ENCODE measurements at regions of chr2 and their contacts with region 1.

Region 1: GRCh38 chr2:231642631-231643494 is 50.2 kb downstream of the TEX44 start:
- DNase-seq: peak; percentile 94 to 97
- ATAC-seq: peak; percentile 82 to 84
- H3K4me3 ChIP-seq: peak overlapping the region; percentile 9 to 43 (median 28)
- H3K27ac ChIP-seq: peak overlapping the region; percentile 93 to 99 (median 96)
- H3K4me1 ChIP-seq: peaks cover 51 to 52% of the 10 kb centered on the region in 2 donors
- H3K27me3 ChIP-seq: no peaks in the 10 kb centered on the region
- CTCF ChIP-seq: no peak
- POLR2A ChIP-seq: peak; percentile 89 to 93

Region 2: GRCh38 chr2:231557571-231558237 is 85.2 kb before region 1 on chr2:
- in situ Hi-C with region 1: no loop called
- intact Hi-C with region 1: no loop called
- DNase-seq: peak; percentile 61 to 76
- ATAC-seq: peak; percentile 99
- H3K4me3 ChIP-seq: no peak overlapping the region
- H3K27ac ChIP-seq: peak overlapping the region in 2 of 4 donors; percentile 46 to 62
- H3K4me1 ChIP-seq: peaks cover 0 to 7% of the 10 kb centered on the region in 2 donors
- H3K27me3 ChIP-seq: no peaks in the 10 kb centered on the region
- CTCF ChIP-seq: peak; percentile 37 to 77 (median 65)
- POLR2A ChIP-seq: no peak

Region 3: DNA sequence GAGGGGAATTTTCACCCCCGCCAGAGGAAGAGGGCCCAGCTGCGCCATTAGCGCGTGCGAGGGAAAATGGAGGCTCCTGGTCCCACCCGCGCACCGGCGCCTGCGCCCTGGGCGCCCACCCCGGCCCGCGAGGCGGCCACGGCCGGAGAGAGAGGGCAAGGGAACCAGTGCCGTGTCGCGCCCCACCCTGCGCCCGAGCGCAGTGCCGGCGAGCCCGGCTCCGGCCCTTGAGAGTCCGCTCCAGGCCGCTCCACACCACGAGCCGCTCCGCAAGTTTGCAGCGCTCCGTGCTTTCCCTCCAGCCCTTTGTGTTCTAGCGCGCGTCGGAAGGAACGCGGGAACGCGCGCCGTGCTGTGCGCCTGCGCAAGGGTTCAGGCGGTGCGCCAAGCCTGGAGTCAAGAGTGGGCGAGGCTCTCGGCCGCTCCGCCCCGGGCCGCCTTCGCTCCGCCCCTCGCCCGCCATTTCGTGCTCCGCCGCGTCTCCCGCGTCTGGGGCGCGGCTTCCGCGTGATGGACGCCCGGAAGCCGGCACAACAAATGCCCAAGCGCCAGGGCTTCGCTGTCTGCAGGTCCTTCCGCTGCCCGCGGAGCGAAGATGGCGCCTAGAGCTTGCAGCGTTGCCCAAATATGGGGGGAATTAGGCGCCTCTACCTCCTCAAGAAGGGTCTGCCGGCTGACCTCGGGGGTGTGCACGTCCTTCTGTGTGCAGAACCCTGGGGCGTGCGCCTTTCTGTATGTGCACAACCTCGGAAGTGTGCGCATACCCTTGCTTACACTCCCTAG is 19.4 kb after region 1 on chr2:
- in situ Hi-C with region 1: no loop called
- intact Hi-C with region 1: loop called (anchors 1 kb)
- DNase-seq: peak; percentile 90 to 94
- ATAC-seq: peak; percentile 70 to 74
- H3K4me3 ChIP-seq: peak overlapping the region; percentile 56 to 81 (median 66)
- H3K27ac ChIP-seq: peak overlapping the region; percentile 86 to 100 (median 98)
- H3K4me1 ChIP-seq: peaks cover 15 to 22% of the 10 kb centered on the region in 2 donors
- H3K27me3 ChIP-seq: no peaks in the 10 kb centered on the region
- CTCF ChIP-seq: peak in 2 of 5 experiments; percentile 42 to 45
- POLR2A ChIP-seq: peak; percentile 48 to 66

Measured in gastrocnemius medialis (tissue), 4 donors.